CD8-positive, alpha-beta T cell (primary cell): ENCODE measurements at regions of chr17 and their contacts with region 1.

Region 1: DNA sequence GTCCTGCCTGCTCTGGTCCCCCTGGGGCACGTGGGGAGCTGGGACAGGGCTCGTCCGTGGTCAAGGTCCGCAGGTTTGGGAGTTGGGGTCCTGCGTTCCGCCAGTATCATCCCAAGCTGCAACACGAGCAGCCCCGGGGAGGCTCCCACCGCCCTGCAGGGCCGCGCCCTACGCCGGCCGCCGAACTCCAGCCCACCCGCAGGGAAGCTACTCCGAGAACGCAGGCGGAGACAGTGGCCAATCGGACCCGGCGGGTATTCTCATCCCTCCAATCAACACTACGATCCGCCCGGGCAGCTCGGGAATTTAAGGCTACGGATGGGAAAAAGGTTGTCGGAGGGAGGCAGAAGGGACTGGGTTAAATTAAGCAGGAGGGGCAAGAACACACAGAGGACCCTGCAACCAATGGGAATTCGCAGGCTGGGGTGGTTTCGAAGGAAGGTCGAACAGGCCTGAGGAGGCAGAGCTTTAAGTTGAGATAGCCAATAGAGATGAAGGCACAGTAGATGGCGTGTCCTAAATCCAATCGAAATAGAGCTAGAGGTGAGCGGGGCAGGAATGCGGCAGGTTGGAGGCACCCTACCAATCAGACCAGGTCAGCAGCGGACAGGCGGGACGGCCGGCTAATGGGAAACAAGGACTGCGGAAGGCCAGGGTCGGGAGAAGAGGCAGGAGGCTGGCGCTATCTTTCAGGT is 626 bp downstream of the SPAG7 start:
- DNase-seq: peak; percentile 87 to 99 (median 94)
- ATAC-seq: peak; percentile 79
- H3K4me3 ChIP-seq: peak overlapping the region; percentile 90
- H3K4me3 Mint-ChIP-seq: no peak overlapping the region
- H3K27ac ChIP-seq: peak overlapping the region; percentile 64 to 90
- H3K27ac Mint-ChIP-seq: peak overlapping the region; percentile 53
- H3K4me1 ChIP-seq: peaks cover 22% of the 10 kb centered on the region
- H3K4me1 Mint-ChIP-seq: peaks cover 19% of the 10 kb centered on the region
- H3K27me3 ChIP-seq: no peaks in the 10 kb centered on the region
- H3K27me3 Mint-ChIP-seq: no peaks in the 10 kb centered on the region
- CTCF ChIP-seq: no peak

Region 2: GRCh38 chr17:4789901-4790704 is 176.9 kb before region 1 on chr17:
- CTCF ChIA-PET with region 1: interaction called, 3 read pairs
- POLR2A ChIA-PET with region 1: interaction called, 5 read pairs
- intact Hi-C with region 1: loop called in 1 of 2 experiments (anchors 10 kb)
- DNase-seq: peak; percentile 54 to 94 (median 77)
- ATAC-seq: peak; percentile 77
- H3K4me3 ChIP-seq: peak overlapping the region; percentile 56 to 60
- H3K4me3 Mint-ChIP-seq: peak overlapping the region; percentile 89
- H3K27ac ChIP-seq: peak overlapping the region; percentile 63 to 68
- H3K27ac Mint-ChIP-seq: peak overlapping the region; percentile 96
- H3K4me1 ChIP-seq: peaks cover 29% of the 10 kb centered on the region
- H3K4me1 Mint-ChIP-seq: peaks cover 27% of the 10 kb centered on the region
- H3K27me3 ChIP-seq: peaks cover 15 to 20% of the 10 kb centered on the region in 2 experiments
- H3K27me3 Mint-ChIP-seq: peaks cover 26% of the 10 kb centered on the region
- CTCF ChIP-seq: peak; percentile 80

Region 3: DNA sequence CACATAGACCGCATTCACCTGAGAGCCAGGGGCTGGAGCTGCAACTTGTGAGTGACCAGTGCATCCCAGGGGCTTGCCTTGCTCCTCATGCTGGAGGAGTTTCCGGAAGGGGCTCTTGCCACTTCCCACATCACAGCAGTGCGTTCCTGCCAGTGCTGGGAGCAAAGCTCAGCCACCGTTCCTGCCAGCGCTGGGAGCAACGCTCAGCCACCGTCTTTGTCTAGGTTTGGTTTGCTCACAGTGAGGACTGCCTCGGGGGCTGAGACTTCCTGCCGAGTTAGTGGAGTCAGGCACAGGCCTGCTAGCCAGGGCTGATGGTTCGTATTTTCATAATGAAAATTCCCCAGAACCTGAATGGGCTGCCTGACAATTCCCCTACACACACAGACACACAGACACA is 58.7 kb before region 1 on chr17:
- CTCF ChIA-PET with region 1: interaction called, 24 read pairs
- POLR2A ChIA-PET with region 1: interaction called, 14 read pairs
- intact Hi-C with region 1: loop called (anchors 1 kb)
- DNase-seq: peak in 1 of 9 experiments; percentile 29
- ATAC-seq: no peak
- H3K4me3 ChIP-seq: no peak overlapping the region
- H3K4me3 Mint-ChIP-seq: no peak overlapping the region
- H3K27ac ChIP-seq: no peak overlapping the region
- H3K27ac Mint-ChIP-seq: no peak overlapping the region
- H3K4me1 ChIP-seq: peaks cover 22% of the 10 kb centered on the region
- H3K4me1 Mint-ChIP-seq: peaks cover 7% of the 10 kb centered on the region
- H3K27me3 ChIP-seq: no peaks in the 10 kb centered on the region
- H3K27me3 Mint-ChIP-seq: no peaks in the 10 kb centered on the region
- CTCF ChIP-seq: no peak

Region 4: DNA sequence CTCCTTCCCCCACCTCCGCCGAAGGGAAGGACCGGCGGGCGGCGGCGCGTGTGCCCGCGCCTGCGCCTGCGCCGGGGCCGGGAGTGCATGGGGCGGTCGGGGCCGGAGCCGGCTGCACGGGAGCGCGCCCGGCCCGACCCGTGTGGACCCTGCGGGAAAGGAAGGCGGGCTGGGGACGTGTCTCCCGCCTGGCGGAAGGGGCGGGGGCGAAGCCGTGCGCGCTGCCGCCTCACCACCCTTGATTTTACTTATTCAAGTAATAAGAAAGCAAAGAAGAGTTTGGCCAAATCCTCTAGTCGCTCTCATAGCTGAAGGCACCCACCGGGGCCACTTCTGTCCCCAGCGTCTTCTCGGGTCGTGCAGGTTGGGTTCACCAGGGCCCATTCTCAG is 18.1 kb before region 1 on chr17:
- CTCF ChIA-PET with region 1: interaction called, 15 read pairs
- POLR2A ChIA-PET with region 1: interaction called, 175 read pairs
- intact Hi-C with region 1: loop called (anchors 1 kb)
- DNase-seq: peak; percentile 44 to 90 (median 70)
- ATAC-seq: peak; percentile 26
- H3K4me3 ChIP-seq: peak overlapping the region; percentile 99 to 100
- H3K4me3 Mint-ChIP-seq: peak overlapping the region; percentile 94
- H3K27ac ChIP-seq: peak overlapping the region; percentile 72 to 81
- H3K27ac Mint-ChIP-seq: peak overlapping the region; percentile 93
- H3K4me1 ChIP-seq: peaks cover 38% of the 10 kb centered on the region
- H3K4me1 Mint-ChIP-seq: peaks cover 45% of the 10 kb centered on the region
- H3K27me3 ChIP-seq: no peaks in the 10 kb centered on the region
- H3K27me3 Mint-ChIP-seq: no peaks in the 10 kb centered on the region
- CTCF ChIP-seq: no peak

Region 5: DNA sequence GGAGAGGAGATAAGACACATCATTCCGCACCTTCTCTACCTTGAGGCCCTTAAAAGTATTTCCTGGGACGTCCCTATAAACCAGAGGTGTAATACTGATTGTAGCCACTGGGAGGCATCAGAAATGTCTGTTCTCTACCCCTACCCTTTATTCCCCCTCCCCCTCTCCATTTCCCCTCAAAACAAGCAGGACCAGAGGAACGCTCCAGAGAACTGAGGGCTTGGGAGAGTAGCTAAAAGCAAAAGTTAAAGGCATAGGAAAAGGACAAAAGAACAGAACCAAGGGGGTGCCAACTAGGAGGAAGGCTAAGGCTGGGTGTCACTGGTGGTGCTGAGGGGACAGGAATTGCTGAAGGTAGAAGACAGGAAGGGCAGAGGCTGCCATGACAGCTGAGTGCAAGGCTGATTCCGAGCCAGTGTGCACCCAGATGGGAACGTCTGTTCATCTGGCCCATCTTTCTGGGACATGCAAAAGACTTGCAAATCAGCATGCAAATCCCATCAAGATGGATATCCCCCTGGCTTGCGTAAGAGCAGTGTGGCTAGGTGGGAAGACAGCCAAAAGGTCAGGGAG is 13.7 kb after region 1 on chr17:
- CTCF ChIA-PET with region 1: interaction called, 34 read pairs
- POLR2A ChIA-PET with region 1: interaction called, 3 read pairs
- intact Hi-C with region 1: no loop called
- DNase-seq: peak in 4 of 9 experiments; percentile 50 to 80 (median 67)
- ATAC-seq: peak; percentile 98
- H3K4me3 ChIP-seq: no peak overlapping the region
- H3K4me3 Mint-ChIP-seq: peak overlapping the region; percentile 23
- H3K27ac ChIP-seq: no peak overlapping the region
- H3K27ac Mint-ChIP-seq: no peak overlapping the region
- H3K4me1 ChIP-seq: peaks cover 9% of the 10 kb centered on the region
- H3K4me1 Mint-ChIP-seq: peaks cover 19% of the 10 kb centered on the region
- H3K27me3 ChIP-seq: no peaks in the 10 kb centered on the region
- H3K27me3 Mint-ChIP-seq: no peaks in the 10 kb centered on the region
- CTCF ChIP-seq: peak; percentile 87

Region 6: GRCh38 chr17:4997302-4998026 is 30.5 kb after region 1 on chr17 and contains the starts of genes INCA1 and KIF1C:
- CTCF ChIA-PET with region 1: no interaction called
- POLR2A ChIA-PET with region 1: interaction called, 11 read pairs
- intact Hi-C with region 1: loop called (anchors 1 kb)
- DNase-seq: peak; percentile 78 to 95 (median 90)
- ATAC-seq: peak; percentile 97
- H3K4me3 ChIP-seq: peak within 1 kb of the TSS; percentile 59 to 89
- H3K4me3 Mint-ChIP-seq: peak within 1 kb of the TSS; percentile 83
- H3K27ac ChIP-seq: peak within 1 kb of the TSS; percentile 56
- H3K27ac Mint-ChIP-seq: peak within 1 kb of the TSS; percentile 84
- H3K4me1 ChIP-seq: peaks cover 20% of the 10 kb centered on the region
- H3K4me1 Mint-ChIP-seq: peaks cover 23% of the 10 kb centered on the region
- H3K27me3 ChIP-seq: no peaks in the 10 kb centered on the region
- H3K27me3 Mint-ChIP-seq: no peaks in the 10 kb centered on the region
- CTCF ChIP-seq: no peak
- total RNA-seq, gene INCA1: 0.24 TPM in 1 of 2 experiments, not detected in the other
- total RNA-seq, gene KIF1C: 7.1 to 7.2 TPM

Region 7: DNA sequence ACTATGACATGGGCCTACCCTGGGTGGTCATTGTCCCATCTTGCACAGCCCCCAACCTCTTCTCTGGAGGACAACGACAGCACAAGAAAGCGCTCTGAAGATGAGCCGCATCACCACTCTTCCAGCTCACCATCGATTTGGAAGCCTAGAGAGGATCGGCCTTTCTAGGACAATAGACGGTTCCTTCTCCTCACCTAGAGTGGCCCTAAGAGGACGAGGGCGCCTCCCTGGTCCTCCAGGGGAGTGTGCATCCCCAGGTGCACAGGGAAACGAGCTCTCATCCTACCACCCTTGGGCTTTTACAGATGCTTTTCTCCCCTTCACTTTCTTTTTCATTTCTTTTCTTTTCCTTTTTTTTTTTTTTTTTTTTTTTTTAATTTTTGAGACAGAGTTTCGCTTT is 88.6 kb after region 1 on chr17:
- CTCF ChIA-PET with region 1: no interaction called
- POLR2A ChIA-PET with region 1: no interaction called
- intact Hi-C with region 1: loop called in 1 of 2 experiments (anchors 5 kb)
- DNase-seq: no peak
- ATAC-seq: no peak
- H3K4me3 ChIP-seq: no peak overlapping the region
- H3K4me3 Mint-ChIP-seq: no peak overlapping the region
- H3K27ac ChIP-seq: no peak overlapping the region
- H3K27ac Mint-ChIP-seq: no peak overlapping the region
- H3K4me1 ChIP-seq: no peaks in the 10 kb centered on the region
- H3K4me1 Mint-ChIP-seq: peaks cover under 1% of the 10 kb centered on the region
- H3K27me3 ChIP-seq: no peaks in the 10 kb centered on the region
- H3K27me3 Mint-ChIP-seq: no peaks in the 10 kb centered on the region
- CTCF ChIP-seq: no peak

Region 8: GRCh38 chr17:5184288-5184687 is 217.3 kb after region 1 on chr17:
- CTCF ChIA-PET with region 1: no interaction called
- POLR2A ChIA-PET with region 1: no interaction called
- intact Hi-C with region 1: no loop called
- DNase-seq: peak in 5 of 9 experiments; percentile 16 to 77 (median 35)
- ATAC-seq: peak; percentile 75
- H3K4me3 ChIP-seq: no peak overlapping the region
- H3K4me3 Mint-ChIP-seq: no peak overlapping the region
- H3K27ac ChIP-seq: no peak overlapping the region
- H3K27ac Mint-ChIP-seq: no peak overlapping the region
- H3K4me1 ChIP-seq: no peaks in the 10 kb centered on the region
- H3K4me1 Mint-ChIP-seq: no peaks in the 10 kb centered on the region
- H3K27me3 ChIP-seq: no peaks in the 10 kb centered on the region
- H3K27me3 Mint-ChIP-seq: no peaks in the 10 kb centered on the region
- CTCF ChIP-seq: no peak